Lower leg skin (tissue), 4 donors: ENCODE measurements at regions of chr18 and their contacts with region 1.

Region 1: GRCh38 chr18:36572135-36572856 is 256.5 kb downstream of the TPGS2 start:
- DNase-seq: no peak
- H3K4me3 ChIP-seq: no peak overlapping the region
- CTCF ChIP-seq: no peak
- POLR2A ChIP-seq: no peak

Region 2: GRCh38 chr18:35441857-35442595 is 1130.3 kb before region 1 on chr18:
- intact Hi-C with region 1: loop called (anchors 5 kb)
- DNase-seq: no peak
- H3K4me3 ChIP-seq: no peak overlapping the region
- CTCF ChIP-seq: no peak
- POLR2A ChIP-seq: no peak

Region 3: DNA sequence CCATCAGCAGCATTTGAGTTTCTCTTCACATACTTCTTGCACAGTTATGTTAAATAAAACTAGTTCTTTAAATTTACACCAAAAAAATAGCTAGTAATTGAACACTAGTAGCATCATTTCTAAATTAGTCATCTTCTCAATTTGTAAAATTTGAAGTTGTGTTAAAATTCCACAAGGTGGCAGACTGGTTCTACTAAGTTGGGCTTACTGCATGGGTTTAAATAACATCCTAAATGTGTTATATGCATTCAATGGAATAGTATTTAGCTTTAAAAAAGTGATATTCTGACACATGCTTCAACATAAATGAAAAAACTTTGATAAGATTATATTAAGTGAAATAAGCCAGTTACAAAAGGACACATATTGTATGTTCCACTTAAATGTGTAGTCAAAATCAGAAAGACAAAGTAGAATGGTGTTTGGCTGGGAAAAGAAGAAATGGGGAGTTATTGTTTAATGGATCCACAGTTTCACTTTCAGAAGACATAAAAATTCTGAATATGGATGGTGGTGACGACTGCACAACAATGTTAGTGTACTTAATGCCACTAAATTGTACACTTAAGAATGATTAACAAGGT is 476.3 kb before region 1 on chr18:
- intact Hi-C with region 1: loop called (anchors 10 kb)
- DNase-seq: no peak
- H3K4me3 ChIP-seq: no peak overlapping the region
- CTCF ChIP-seq: no peak
- POLR2A ChIP-seq: no peak

Region 4: DNA sequence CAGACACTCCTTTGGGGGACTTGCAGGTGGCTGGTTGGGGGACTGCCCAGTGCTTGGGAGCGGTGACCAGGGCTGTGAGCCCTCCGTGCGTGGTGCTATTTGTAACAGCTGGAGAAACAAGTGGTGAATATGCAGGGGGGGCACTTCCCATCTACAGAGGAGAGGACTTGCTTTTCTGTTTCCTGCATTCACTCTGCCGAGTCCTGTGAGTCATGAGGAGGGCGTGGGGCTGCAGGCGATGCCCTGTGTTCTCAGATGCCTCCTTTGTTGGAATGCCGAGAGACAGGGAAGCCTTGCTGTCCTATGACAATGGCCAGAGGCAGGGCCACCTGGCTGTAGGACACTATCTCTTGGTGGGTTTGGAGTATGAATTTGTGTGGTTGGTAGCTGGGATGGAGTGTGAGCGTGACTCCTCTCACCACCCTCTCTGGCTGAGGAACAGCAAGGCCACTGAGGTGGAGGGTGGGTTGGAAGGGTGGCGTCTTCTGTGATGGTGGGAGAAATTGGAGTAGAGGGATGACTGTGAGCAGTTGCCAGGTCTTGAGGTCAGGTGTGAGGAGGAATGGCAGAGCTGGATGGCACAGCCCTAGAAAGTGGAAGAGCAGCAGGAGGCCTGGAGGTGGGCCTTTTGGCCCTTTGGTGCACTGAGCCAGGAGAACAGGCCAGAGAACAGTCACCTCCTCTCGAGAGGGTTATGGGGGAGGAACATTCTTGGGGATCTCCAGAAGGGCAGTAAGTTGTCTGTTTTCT is 250.5 kb before region 1 on chr18:
- intact Hi-C with region 1: no loop called
- DNase-seq: peak in 1 of 2 donors; percentile 9
- H3K4me3 ChIP-seq: no peak overlapping the region
- CTCF ChIP-seq: no peak
- POLR2A ChIP-seq: no peak